ENCODE measurements at regions of chr17 and their contacts with region 1.

Region 1: GRCh38 chr17:17021194-17021863 is 20.9 kb upstream of the MPRIP start:
- DNase-seq: peak; percentile 54
- H3K4me3 ChIP-seq: no peak overlapping the region
- H3K27ac ChIP-seq: peak overlapping the region in 3 of 4 donors; percentile 2 to 26 (median 20)
- H3K4me1 ChIP-seq: peaks cover 5 to 15% (median 11%) of the 10 kb centered on the region in 4 donors
- H3K27me3 ChIP-seq: no peaks in the 10 kb centered on the region
- CTCF ChIP-seq: no peak
- EP300 ChIP-seq: no peak
- POLR2A ChIP-seq: no peak

Region 2: GRCh38 chr17:18937981-18938691 is 1916.8 kb after region 1 on chr17:
- in situ Hi-C with region 1: no loop called
- intact Hi-C with region 1: loop called (anchors 5 kb)
- DNase-seq: no peak
- H3K4me3 ChIP-seq: no peak overlapping the region
- H3K27ac ChIP-seq: peak overlapping the region in 2 of 4 donors; percentile 7 to 29
- H3K4me1 ChIP-seq: peaks cover 0 to 8% (median 2%) of the 10 kb centered on the region in 4 donors
- H3K27me3 ChIP-seq: no peaks in the 10 kb centered on the region
- CTCF ChIP-seq: no peak
- EP300 ChIP-seq: no peak
- POLR2A ChIP-seq: no peak

Measured in transverse colon (tissue), 4 donors.